ENCODE measurements at regions of chr6 and their contacts with region 1.

Region 1: GRCh38 chr6:18122124-18123093 is at the start of gene NHLRC1:
- DNase-seq: peak; percentile 92
- ATAC-seq: peak; percentile 99
- total RNA-seq, gene NHLRC1: 1.2 TPM

Region 2: GRCh38 chr6:17156112-17156921 is 966.1 kb before region 1 on chr6:
- intact Hi-C with region 1: loop called (anchors 5 kb)
- DNase-seq: no peak
- ATAC-seq: no peak

Region 3: GRCh38 chr6:17831135-17831534 is 291.3 kb before region 1 on chr6:
- intact Hi-C with region 1: loop called (anchors 2 kb)
- DNase-seq: no peak
- ATAC-seq: no peak

Region 4: GRCh38 chr6:17845598-17845997 is 276.8 kb before region 1 on chr6:
- intact Hi-C with region 1: loop called (anchors 5 kb)
- DNase-seq: no peak
- ATAC-seq: no peak

Region 5: DNA sequence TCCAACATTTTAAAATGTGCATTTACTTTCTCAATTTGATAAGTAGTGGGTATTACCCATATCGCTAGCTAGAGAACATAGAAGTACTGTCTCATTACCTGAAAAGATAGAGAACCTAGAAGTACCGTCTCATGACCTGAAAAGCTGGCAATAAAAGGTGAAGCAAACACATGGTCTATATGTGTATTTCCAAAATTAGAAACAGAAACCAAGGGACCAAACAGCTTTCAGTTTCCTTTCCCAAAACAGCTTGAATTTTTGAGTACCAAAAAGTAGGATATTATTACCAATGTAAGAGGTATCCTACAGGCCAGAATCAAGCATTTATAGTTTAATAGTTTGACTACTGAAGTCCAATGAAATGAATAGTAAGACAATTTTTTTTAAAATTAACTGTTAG is 212.2 kb before region 1 on chr6:
- intact Hi-C with region 1: loop called (anchors 10 kb)
- DNase-seq: no peak
- ATAC-seq: no peak

Region 6: GRCh38 chr6:17987576-17988421 is 134.6 kb before region 1 on chr6 and contains the start of gene KIF13A:
- intact Hi-C with region 1: loop called (anchors 2 kb)
- DNase-seq: peak; percentile 85
- ATAC-seq: peak; percentile 75
- total RNA-seq, gene KIF13A: 57.3 TPM

Measured in Right ventricle myocardium inferior (tissue), 1 donor.